ENCODE measurements at regions of chr2 and their contacts with region 1.

Region 1: DNA sequence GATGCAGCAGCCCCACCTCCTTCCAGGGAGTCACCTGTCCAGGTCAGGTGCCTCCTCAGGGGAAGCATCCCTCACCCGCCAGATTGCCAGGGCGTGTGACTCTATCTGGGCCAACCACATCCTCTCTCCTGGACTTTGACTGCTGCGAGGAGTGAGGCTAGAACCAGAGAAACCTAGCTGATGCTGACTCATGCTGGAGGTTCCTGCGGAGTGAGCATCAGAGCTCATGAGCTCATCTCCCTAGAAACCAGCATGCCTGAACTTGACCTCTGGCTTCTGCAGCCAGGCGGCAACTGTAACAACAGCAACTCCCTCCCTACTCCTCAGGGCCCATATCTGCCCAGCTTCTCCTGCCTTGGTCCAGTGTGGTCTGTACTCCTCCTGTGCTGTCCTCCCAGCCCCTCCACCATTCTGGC is 28.3 kb upstream of the NT5DC4 start:
- DNase-seq: peak; percentile 98
- H3K4me3 Mint-ChIP-seq: peak overlapping the region; percentile 7
- H3K27ac Mint-ChIP-seq: peak overlapping the region; percentile 86
- H3K4me1 Mint-ChIP-seq: peaks cover 22% of the 10 kb centered on the region
- H3K27me3 Mint-ChIP-seq: no peaks in the 10 kb centered on the region
- CTCF ChIP-seq: no peak

Region 2: DNA sequence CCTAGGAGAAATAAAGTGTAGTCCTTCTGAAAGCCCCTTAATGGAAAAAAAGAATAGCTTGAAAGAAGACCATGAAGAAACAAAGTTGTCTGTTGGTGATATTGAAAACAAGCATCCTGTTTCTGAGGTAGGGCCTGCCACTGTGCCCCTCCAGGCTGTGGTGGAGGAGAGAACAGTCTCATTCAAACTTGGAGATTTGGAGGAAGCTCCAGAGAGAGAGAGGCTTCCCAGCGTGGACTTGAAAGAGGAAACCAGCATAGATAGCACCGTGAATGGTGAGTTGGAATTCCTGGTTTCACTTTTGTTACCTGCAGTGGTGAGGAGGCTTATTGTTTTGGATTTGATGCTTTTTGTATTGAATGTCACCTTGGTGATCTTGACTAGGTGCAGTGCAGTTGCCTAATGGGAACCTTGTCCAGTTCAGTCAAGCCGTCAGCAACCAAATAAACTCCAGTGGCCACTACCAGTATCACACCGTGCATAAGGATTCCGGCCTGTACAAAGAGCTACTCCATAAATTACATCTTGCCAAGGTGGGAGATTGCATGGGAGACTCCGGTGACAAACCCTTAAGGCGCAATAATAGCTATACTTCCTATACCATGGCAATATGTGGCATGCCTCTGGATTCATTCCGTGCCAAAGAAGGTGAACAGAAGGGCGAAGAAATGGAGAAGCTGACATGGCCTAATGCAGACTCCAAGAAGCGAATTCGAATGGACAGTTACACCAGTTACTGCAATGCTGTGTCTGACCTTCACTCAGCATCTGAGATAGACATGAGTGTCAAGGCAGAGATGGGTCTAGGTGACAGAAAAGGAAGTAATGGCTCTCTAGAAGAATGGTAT is 33.5 kb before region 1 on chr2:
- CTCF ChIA-PET with region 1: interaction called, 6 read pairs
- POLR2A ChIA-PET with region 1: interaction called, 10 read pairs
- intact Hi-C with region 1: no loop called
- DNase-seq: peak; percentile 49
- H3K4me3 Mint-ChIP-seq: no peak overlapping the region
- H3K27ac Mint-ChIP-seq: peak overlapping the region; percentile 37
- H3K4me1 Mint-ChIP-seq: peaks cover 11% of the 10 kb centered on the region
- H3K27me3 Mint-ChIP-seq: no peaks in the 10 kb centered on the region
- CTCF ChIP-seq: no peak

Region 3: GRCh38 chr2:112679484-112679883 is 13.0 kb before region 1 on chr2:
- CTCF ChIA-PET with region 1: interaction called, 8 read pairs
- POLR2A ChIA-PET with region 1: interaction called, 26 read pairs
- intact Hi-C with region 1: no loop called
- DNase-seq: peak; percentile 80
- H3K4me3 Mint-ChIP-seq: no peak overlapping the region
- H3K27ac Mint-ChIP-seq: peak overlapping the region; percentile 39
- H3K4me1 Mint-ChIP-seq: peaks cover 10% of the 10 kb centered on the region
- H3K27me3 Mint-ChIP-seq: no peaks in the 10 kb centered on the region
- CTCF ChIP-seq: no peak